K562 (cell line): ENCODE measurements at regions of chr7 and their contacts with region 1.

Region 1: DNA sequence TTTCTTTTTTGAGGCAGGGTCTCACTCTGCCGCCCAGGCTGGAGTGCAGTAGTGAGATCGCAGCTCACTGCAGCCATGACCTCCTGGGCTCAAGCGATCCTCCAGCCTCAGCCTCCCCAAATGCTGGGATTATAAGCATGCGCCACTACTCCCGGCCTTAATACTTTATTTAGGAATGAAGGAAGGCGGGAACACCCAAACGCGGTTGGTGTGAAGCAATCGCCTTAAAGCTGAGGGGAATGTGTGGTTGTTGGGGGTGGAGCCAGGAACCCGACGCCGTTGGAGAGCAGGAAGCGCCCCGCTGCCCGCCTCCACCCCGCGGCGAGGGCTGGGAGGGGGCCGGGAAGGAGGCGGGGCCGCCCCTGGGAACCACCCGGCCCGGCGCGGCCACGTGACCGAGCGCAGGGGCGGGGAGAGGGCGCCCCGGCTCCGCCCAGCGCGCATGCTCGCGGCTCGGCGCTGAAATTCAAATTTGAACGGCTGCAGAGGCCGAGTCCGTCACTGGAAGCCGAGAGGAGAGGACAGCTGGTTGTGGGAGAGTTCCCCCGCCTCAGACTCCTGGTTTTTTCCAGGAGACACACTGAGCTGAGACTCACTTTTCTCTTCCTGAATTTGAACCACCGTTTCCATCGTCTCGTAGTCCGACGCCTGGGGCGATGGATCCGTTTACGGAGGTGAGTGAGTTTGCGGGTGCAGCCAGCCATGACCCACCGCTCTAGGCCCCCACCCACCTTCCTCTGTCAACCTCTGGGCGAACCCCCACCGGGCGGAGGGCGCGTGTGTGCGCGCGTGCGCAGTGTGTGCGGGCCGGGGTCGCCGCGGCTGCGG is at the start of gene ANLN:
- DNase-seq: peak; percentile 97 to 100 (median 100)
- ATAC-seq: peak; percentile 89
- H3K4me3 ChIP-seq: peak within 1 kb of the TSS; percentile 77
- H3K27ac ChIP-seq: peak within 1 kb of the TSS; percentile 95
- H3K4me1 ChIP-seq: peaks cover 23 to 48% of the 10 kb centered on the region in 2 experiments
- H3K27me3 ChIP-seq: no peaks in the 10 kb centered on the region
- CTCF ChIP-seq: no peak
- EP300 ChIP-seq: no peak; the same call in 1 of the 2 replicates
- POLR2A ChIP-seq: peak; percentile 97
- RAD21 ChIP-seq: no peak
- polyA plus RNA-seq, gene ANLN: 18.1 to 37.3 TPM

Region 2: DNA sequence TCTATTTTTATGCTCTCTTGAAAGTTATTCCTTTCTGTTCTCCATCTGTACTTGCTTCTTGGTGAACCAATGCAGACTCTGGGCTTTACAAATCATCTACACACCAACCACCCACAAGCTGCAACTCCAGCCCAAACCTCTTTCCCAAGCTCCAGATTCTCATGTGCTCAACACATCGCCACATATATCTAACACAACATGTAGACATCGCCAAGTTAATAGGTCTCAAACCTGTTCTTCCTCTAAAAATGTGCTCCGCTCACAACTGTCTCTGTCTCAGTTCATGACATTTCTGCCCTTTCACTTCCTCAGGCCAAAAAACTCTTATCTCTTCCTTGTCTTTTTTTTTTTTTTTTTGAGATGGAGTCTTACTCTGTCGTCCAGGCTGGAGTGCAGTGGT is 332.3 kb before region 1 on chr7:
- CTCF ChIA-PET with region 1: no interaction called
- POLR2A ChIA-PET with region 1: no interaction called
- in situ Hi-C with region 1: no loop called
- intact Hi-C with region 1: no loop called
- DNase-seq: no peak
- ATAC-seq: no peak
- H3K4me3 ChIP-seq: no peak overlapping the region
- H3K27ac ChIP-seq: no peak overlapping the region
- H3K4me1 ChIP-seq: no peaks in the 10 kb centered on the region
- H3K27me3 ChIP-seq: peaks cover 5 to 30% of the 10 kb centered on the region in 2 experiments; a peak in 3 of 5 replicates
- CTCF ChIP-seq: no peak
- EP300 ChIP-seq: no peak
- POLR2A ChIP-seq: no peak
- RAD21 ChIP-seq: no peak

Region 3: DNA sequence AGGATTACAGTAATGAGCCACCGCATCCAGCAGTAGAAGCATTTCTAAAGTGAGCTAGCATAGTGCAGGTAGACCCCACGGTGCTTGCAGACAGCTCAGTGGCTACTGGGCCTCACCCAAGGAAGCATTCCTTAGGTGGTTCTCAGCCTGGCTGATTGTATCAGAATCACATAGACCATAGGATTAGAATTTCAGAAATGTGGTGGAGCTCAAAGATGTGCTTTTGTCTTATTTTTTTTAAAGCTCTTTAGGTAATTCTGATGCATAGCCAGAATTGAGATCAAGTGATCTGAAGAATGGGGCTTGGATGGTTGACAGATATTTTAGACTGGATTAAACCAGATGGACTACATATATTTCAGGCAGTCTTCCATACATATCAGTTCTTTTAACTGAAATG is 11.0 kb after region 1 on chr7:
- CTCF ChIA-PET with region 1: no interaction called
- POLR2A ChIA-PET with region 1: interaction called, 58 read pairs
- in situ Hi-C with region 1: no loop called
- intact Hi-C with region 1: no loop called
- DNase-seq: no peak
- ATAC-seq: no peak
- H3K4me3 ChIP-seq: no peak overlapping the region
- H3K27ac ChIP-seq: no peak overlapping the region
- H3K4me1 ChIP-seq: peaks cover 4 to 12% of the 10 kb centered on the region in 2 experiments; a peak in 2 of 5 replicates
- H3K27me3 ChIP-seq: no peaks in the 10 kb centered on the region
- CTCF ChIP-seq: no peak
- EP300 ChIP-seq: no peak
- POLR2A ChIP-seq: no peak
- RAD21 ChIP-seq: no peak

Region 4: GRCh38 chr7:36409180-36409579 is 19.6 kb after region 1 on chr7:
- CTCF ChIA-PET with region 1: no interaction called
- POLR2A ChIA-PET with region 1: interaction called, 58 read pairs
- in situ Hi-C with region 1: no loop called
- intact Hi-C with region 1: no loop called
- DNase-seq: no peak
- ATAC-seq: no peak
- H3K4me3 ChIP-seq: no peak overlapping the region
- H3K27ac ChIP-seq: no peak overlapping the region
- H3K4me1 ChIP-seq: peaks cover 0 to 14% of the 10 kb centered on the region in 2 experiments; a peak in 3 of 5 replicates
- H3K27me3 ChIP-seq: no peaks in the 10 kb centered on the region
- CTCF ChIP-seq: no peak
- EP300 ChIP-seq: no peak
- POLR2A ChIP-seq: no peak
- RAD21 ChIP-seq: no peak